Posterior vena cava (tissue), 2 donors: ENCODE measurements at regions of chr5 and their contacts with region 1.

Region 1: GRCh38 chr5:168585119-168586103 is 6.2 kb upstream of the PANK3 start:
- DNase-seq: no peak

Region 2: GRCh38 chr5:168552146-168552545 is 33.3 kb before region 1 on chr5:
- intact Hi-C with region 1: no loop called
- DNase-seq: no peak

Region 3: GRCh38 chr5:168603746-168604145 is 18.3 kb after region 1 on chr5:
- intact Hi-C with region 1: loop called in 1 of 2 experiments (anchors 2 kb)
- DNase-seq: no peak